ENCODE measurements at regions of chr6 and their contacts with region 1.

Region 1: DNA sequence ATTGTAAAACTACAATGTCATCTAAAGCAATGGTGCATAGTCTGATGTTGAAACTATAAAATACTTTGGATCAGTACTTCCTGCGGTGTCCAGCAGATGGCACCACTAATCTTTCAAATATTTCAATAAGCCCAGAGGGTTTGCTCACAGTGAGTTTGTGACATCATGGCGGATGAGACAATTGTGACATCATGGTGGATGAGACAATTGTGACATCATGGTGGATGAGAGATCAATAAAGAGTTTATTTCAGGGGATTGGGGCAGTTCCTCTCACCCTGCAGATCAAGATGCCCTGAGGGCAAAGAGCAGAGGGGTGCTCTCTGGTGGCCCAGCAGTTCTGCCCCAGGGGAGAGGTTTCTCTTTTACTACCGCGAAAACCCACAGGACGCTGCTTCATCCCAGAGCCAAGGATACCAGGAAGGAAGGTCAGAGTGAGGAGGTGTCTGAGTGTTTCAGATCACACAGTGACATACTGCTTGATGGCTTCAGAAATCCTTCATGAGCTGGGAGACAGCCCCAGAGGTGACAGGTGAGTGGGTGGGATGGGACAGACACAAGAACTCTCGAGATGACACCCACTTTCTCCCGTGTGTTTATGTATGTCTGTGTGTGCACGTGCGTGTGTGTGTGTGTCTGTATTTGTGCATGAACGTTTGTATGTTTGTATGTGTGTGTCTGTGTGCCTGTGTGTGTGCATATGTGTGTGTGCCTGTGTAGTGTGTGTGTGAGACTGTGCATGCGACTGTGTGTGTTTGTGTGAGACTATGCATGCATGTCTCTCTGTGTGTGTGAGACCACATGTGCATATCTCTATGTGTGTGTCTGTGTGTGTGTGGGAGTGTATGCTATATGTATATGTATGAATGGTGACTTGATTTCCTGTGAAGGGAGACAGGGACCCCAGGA is 7.3 kb upstream of the ULBP2 start:
- DNase-seq: peak; percentile 66 to 81 (median 74)
- H3K4me3 ChIP-seq: no peak overlapping the region
- H3K4me3 Mint-ChIP-seq: peak overlapping the region in 1 of 2 donors; percentile 63
- H3K27ac ChIP-seq: no peak overlapping the region
- H3K27ac Mint-ChIP-seq: peak overlapping the region in 5 of 7 donors; percentile 13 to 66 (median 27)
- H3K4me1 ChIP-seq: peaks cover 11 to 17% of the 10 kb centered on the region in 2 donors
- H3K4me1 Mint-ChIP-seq: peaks cover 15% of the 10 kb centered on the region
- H3K27me3 ChIP-seq: peaks cover 69 to 91% of the 10 kb centered on the region in 2 donors
- H3K27me3 Mint-ChIP-seq: peaks cover 73 to 88% (median 74%) of the 10 kb centered on the region in 3 donors
- CTCF ChIP-seq: peak; percentile 84

Region 2: GRCh38 chr6:149545754-149546528 is 388.6 kb before region 1 on chr6 and contains the start of gene PPIL4:
- intact Hi-C with region 1: loop called in 1 of 2 experiments (anchors 10 kb)
- DNase-seq: peak; percentile 94 to 98 (median 96)
- H3K4me3 ChIP-seq: peak within 1 kb of the TSS; percentile 63 to 85 (median 85)
- H3K4me3 Mint-ChIP-seq: peak within 1 kb of the TSS; percentile 97 to 99
- H3K27ac ChIP-seq: peak within 1 kb of the TSS; percentile 87 to 97
- H3K27ac Mint-ChIP-seq: peak within 1 kb of the TSS; percentile 99 to 100 (median 100)
- H3K4me1 ChIP-seq: peaks cover 18 to 21% of the 10 kb centered on the region in 2 donors
- H3K4me1 Mint-ChIP-seq: peaks cover 25% of the 10 kb centered on the region
- H3K27me3 ChIP-seq: peaks cover 0 to 3% of the 10 kb centered on the region in 2 donors
- H3K27me3 Mint-ChIP-seq: peaks cover 0 to 12% (median 3%) of the 10 kb centered on the region in 3 donors
- CTCF ChIP-seq: peak; percentile 78
- polyA plus RNA-seq, gene PPIL4: 3.5 to 9.2 (median 4.4) TPM

Region 3: GRCh38 chr6:149779644-149779963 is 154.9 kb before region 1 on chr6:
- intact Hi-C with region 1: no loop called
- DNase-seq: no peak
- H3K4me3 ChIP-seq: no peak overlapping the region
- H3K4me3 Mint-ChIP-seq: no peak overlapping the region
- H3K27ac ChIP-seq: peak overlapping the region in 1 of 2 donors; percentile 36
- H3K27ac Mint-ChIP-seq: peak overlapping the region in 1 of 7 donors; percentile 69
- H3K4me1 ChIP-seq: no peaks in the 10 kb centered on the region
- H3K4me1 Mint-ChIP-seq: peaks cover 3% of the 10 kb centered on the region
- H3K27me3 ChIP-seq: no peaks in the 10 kb centered on the region
- H3K27me3 Mint-ChIP-seq: no peaks in the 10 kb centered on the region
- CTCF ChIP-seq: no peak

Region 4: DNA sequence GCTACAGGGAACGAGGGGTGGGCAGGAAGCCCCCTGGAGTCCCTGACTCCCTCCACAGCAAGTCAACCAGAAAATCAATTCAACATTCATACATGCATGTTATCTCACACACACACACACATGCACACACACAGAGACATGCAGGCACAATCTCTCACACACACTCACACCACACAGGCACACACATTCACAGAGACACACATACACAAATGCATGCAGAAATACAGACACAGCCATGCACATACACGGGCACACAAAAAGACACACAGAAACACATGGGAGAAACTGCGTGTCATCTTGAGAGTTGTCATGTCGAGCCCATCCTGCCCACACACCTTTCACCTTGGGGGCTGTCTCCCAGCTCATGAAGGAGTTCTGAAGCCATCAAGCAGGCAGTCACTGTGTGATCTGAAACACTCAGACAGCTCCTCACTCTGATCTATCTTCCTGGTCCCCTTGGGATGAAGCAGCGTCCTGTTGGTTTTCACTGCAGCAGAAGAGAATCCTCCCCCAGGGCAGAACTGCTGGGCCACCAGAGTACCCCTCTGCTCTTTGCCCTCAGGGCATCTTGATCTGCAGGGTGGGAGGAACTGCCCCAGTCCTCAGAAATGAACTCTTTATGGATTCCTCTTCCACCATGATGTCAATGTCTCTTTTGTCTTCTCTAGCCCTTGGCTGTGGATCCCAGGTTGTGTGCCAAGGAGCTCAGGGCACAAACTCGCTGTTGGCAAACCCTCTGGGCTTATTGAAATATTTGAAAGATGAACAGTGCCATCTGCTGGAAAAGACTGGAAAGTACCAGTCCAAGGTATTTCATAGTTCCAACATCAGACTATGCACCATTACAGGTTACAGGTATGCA is 82.1 kb after region 1 on chr6:
- intact Hi-C with region 1: loop called (anchors 2 kb)
- DNase-seq: peak; percentile 42 to 74 (median 59)
- H3K4me3 ChIP-seq: no peak overlapping the region
- H3K4me3 Mint-ChIP-seq: peak overlapping the region in 1 of 2 donors; percentile 89
- H3K27ac ChIP-seq: no peak overlapping the region
- H3K27ac Mint-ChIP-seq: no peak overlapping the region
- H3K4me1 ChIP-seq: peaks cover 4% of the 10 kb centered on the region in 2 donors
- H3K4me1 Mint-ChIP-seq: peaks cover 10% of the 10 kb centered on the region
- H3K27me3 ChIP-seq: peaks cover 48 to 65% of the 10 kb centered on the region in 2 donors
- H3K27me3 Mint-ChIP-seq: peaks cover 60 to 79% (median 63%) of the 10 kb centered on the region in 3 donors
- CTCF ChIP-seq: peak; percentile 84

Region 5: GRCh38 chr6:150057501-150057951 is 123.0 kb after region 1 on chr6:
- intact Hi-C with region 1: no loop called
- DNase-seq: no peak
- H3K4me3 ChIP-seq: no peak overlapping the region
- H3K4me3 Mint-ChIP-seq: no peak overlapping the region
- H3K27ac ChIP-seq: no peak overlapping the region
- H3K27ac Mint-ChIP-seq: no peak overlapping the region
- H3K4me1 ChIP-seq: no peaks in the 10 kb centered on the region
- H3K4me1 Mint-ChIP-seq: peaks cover 4% of the 10 kb centered on the region
- H3K27me3 ChIP-seq: no peaks in the 10 kb centered on the region
- H3K27me3 Mint-ChIP-seq: peaks cover 24 to 43% (median 37%) of the 10 kb centered on the region in 3 donors
- CTCF ChIP-seq: no peak

Measured in CD14-positive monocyte (primary cell).